CD4-positive, alpha-beta T cell (primary cell): ENCODE measurements at regions of chr6 and their contacts with region 1.

Region 1: DNA sequence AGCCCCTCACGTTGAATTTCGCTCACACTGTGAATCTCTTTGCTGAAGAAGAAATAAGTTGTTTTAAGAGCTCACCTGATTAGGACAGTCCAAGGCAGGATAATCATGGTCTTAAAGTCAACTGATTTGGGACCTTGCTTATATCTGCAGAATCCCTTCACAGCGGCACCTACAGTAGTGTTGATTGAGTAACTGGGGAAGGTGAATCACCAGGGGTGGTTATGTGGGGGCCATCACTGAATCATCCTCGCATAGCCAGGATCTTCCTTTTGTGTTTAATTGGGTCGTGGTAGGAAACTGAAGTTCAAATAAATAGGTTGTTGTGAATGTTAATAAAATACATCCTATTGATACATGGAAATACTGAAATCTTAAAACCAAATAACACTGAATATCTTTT is 20.2 kb upstream of the MICA start:
- DNase-seq: no peak
- ATAC-seq: no peak
- H3K4me3 ChIP-seq: no peak overlapping the region
- H3K4me3 Mint-ChIP-seq: no peak overlapping the region
- H3K27ac ChIP-seq: no peak overlapping the region
- H3K27ac Mint-ChIP-seq: no peak overlapping the region
- H3K4me1 ChIP-seq: no peaks in the 10 kb centered on the region
- H3K4me1 Mint-ChIP-seq: no peaks in the 10 kb centered on the region
- H3K27me3 ChIP-seq: peaks cover 4 to 8% of the 10 kb centered on the region in 2 experiments
- H3K27me3 Mint-ChIP-seq: peaks cover 11% of the 10 kb centered on the region
- CTCF ChIP-seq: no peak

Region 2: DNA sequence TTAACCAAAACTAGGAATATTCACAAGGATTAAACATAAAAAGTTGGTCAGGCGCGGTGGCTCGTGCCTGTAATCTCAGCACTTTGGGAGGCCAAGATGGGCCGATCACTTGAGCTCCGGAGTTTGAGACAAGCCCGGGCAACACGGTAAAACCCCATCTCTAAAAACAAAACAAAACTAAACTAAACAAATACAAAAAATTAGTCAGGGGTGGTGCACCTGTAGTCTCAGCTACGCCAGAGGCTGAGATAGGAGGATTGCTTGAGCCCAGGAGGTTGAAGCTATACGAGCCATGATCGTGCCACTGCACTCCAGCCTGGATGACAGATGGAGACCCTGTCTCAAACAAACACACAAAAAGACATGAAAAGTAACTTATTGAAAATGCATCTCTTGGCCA is 247.4 kb before region 1 on chr6:
- CTCF ChIA-PET with region 1: no interaction called
- POLR2A ChIA-PET with region 1: no interaction called
- intact Hi-C with region 1: loop called in 1 of 2 experiments (anchors 2 kb)
- DNase-seq: no peak
- ATAC-seq: no peak
- H3K4me3 ChIP-seq: no peak overlapping the region
- H3K4me3 Mint-ChIP-seq: no peak overlapping the region
- H3K27ac ChIP-seq: no peak overlapping the region
- H3K27ac Mint-ChIP-seq: no peak overlapping the region
- H3K4me1 ChIP-seq: peaks cover 9% of the 10 kb centered on the region
- H3K4me1 Mint-ChIP-seq: peaks cover 6% of the 10 kb centered on the region
- H3K27me3 ChIP-seq: no peaks in the 10 kb centered on the region
- H3K27me3 Mint-ChIP-seq: no peaks in the 10 kb centered on the region
- CTCF ChIP-seq: no peak

Region 3: DNA sequence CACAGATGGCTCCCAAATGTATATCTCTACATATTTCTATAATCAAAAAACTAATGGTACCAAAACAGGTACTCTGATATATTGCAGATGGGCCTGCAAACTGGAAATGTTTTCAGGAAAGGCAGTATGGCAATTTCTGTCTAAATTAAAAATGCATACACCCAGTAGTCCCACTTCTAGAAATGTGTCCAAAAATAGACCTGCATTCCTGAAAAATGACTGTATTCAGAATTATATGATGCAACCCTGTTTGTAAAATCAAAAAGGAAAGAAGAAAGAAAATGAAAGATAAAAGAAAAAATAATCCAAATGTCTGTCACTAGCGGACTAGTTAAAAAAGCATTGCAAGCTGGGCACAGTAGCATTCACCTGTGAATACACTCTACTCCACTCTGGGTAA is 101.9 kb after region 1 on chr6:
- CTCF ChIA-PET with region 1: no interaction called
- POLR2A ChIA-PET with region 1: no interaction called
- intact Hi-C with region 1: loop called in 1 of 2 experiments (anchors 1 kb)
- DNase-seq: no peak
- ATAC-seq: no peak
- H3K4me3 ChIP-seq: no peak overlapping the region
- H3K4me3 Mint-ChIP-seq: no peak overlapping the region
- H3K27ac ChIP-seq: no peak overlapping the region
- H3K27ac Mint-ChIP-seq: no peak overlapping the region
- H3K4me1 ChIP-seq: no peaks in the 10 kb centered on the region
- H3K4me1 Mint-ChIP-seq: no peaks in the 10 kb centered on the region
- H3K27me3 ChIP-seq: no peaks in the 10 kb centered on the region
- H3K27me3 Mint-ChIP-seq: no peaks in the 10 kb centered on the region
- CTCF ChIP-seq: no peak

Region 4: GRCh38 chr6:32886674-32887383 is 1503.7 kb after region 1 on chr6:
- CTCF ChIA-PET with region 1: no interaction called
- POLR2A ChIA-PET with region 1: no interaction called
- intact Hi-C with region 1: no loop called
- DNase-seq: no peak
- ATAC-seq: no peak
- H3K4me3 ChIP-seq: no peak overlapping the region
- H3K4me3 Mint-ChIP-seq: no peak overlapping the region
- H3K27ac ChIP-seq: no peak overlapping the region
- H3K27ac Mint-ChIP-seq: no peak overlapping the region
- H3K4me1 ChIP-seq: no peaks in the 10 kb centered on the region
- H3K4me1 Mint-ChIP-seq: no peaks in the 10 kb centered on the region
- H3K27me3 ChIP-seq: no peaks in the 10 kb centered on the region
- H3K27me3 Mint-ChIP-seq: no peaks in the 10 kb centered on the region
- CTCF ChIP-seq: no peak